Sigmoid colon (tissue), 7 donors: ENCODE measurements at regions of chr4 and their contacts with region 1.

Region 1: GRCh38 chr4:47669946-47670345 is 167.9 kb downstream of the CORIN start:
- DNase-seq: no peak
- H3K4me3 ChIP-seq: no peak overlapping the region
- H3K27ac ChIP-seq: no peak overlapping the region
- H3K4me1 ChIP-seq: no peaks in the 10 kb centered on the region
- H3K27me3 ChIP-seq: no peaks in the 10 kb centered on the region
- CTCF ChIP-seq: no peak
- EP300 ChIP-seq: no peak
- POLR2A ChIP-seq: no peak

Region 2: GRCh38 chr4:47819178-47819577 is 149.2 kb after region 1 on chr4:
- intact Hi-C with region 1: no loop called
- DNase-seq: no peak
- H3K4me3 ChIP-seq: no peak overlapping the region
- H3K27ac ChIP-seq: no peak overlapping the region
- H3K4me1 ChIP-seq: no peaks in the 10 kb centered on the region
- H3K27me3 ChIP-seq: no peaks in the 10 kb centered on the region
- CTCF ChIP-seq: no peak
- EP300 ChIP-seq: no peak
- POLR2A ChIP-seq: no peak

Region 3: DNA sequence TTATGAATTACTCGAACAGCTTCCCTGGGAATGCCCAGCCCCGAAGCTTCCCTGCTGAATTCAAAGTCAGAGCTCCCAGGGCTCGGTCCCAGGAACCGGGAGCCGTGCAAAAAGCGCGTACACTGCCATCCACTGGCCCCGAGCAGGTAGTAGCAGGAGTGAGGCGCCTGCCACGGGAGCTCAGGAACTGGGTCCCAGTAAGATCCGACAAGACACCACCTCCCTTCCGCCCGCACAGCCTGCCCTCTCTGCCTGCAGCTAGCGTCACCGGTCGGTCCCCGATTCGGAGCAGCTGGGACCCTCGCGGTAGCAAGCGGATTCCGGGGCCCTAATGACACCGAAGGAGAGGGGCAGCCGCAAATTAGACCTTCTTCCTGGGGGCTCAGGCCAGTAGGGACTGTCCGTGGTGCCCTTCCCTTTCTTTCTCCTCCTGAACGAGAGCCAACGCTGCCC is 166.7 kb after region 1 on chr4:
- intact Hi-C with region 1: loop called (anchors 10 kb)
- DNase-seq: peak; percentile 89
- H3K4me3 ChIP-seq: peak overlapping the region; percentile 15 to 49 (median 43)
- H3K27ac ChIP-seq: no peak overlapping the region
- H3K4me1 ChIP-seq: peaks cover 0 to 31% (median 26%) of the 10 kb centered on the region in 4 donors
- H3K27me3 ChIP-seq: peaks cover 0 to 9% (median 0%) of the 10 kb centered on the region in 3 donors
- CTCF ChIP-seq: peak in 3 of 4 experiments; percentile 32 to 53 (median 39)
- EP300 ChIP-seq: no peak
- POLR2A ChIP-seq: no peak

Region 4: DNA sequence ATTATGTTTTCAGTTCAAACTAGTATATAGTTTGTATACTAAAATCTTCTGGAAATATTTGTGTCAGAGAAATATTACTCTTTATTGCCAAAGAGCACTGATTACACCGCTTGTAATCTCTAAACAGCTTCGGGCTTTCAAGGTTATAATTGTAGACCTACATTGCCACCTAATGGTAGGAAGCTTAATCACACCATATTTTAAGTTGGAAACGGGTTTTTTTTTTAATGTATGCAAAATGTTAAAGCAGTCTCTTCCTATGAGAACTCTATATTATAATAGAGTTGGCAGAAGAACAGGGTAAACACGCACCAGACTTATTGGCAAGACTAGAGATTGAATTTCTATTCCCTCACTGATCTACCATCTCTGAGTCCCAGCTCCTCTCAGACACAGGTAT is 263.9 kb after region 1 on chr4:
- intact Hi-C with region 1: loop called (anchors 5 kb)
- DNase-seq: no peak
- H3K4me3 ChIP-seq: no peak overlapping the region
- H3K27ac ChIP-seq: no peak overlapping the region
- H3K4me1 ChIP-seq: no peaks in the 10 kb centered on the region
- H3K27me3 ChIP-seq: no peaks in the 10 kb centered on the region
- CTCF ChIP-seq: peak in 2 of 4 experiments; percentile 9 to 41
- EP300 ChIP-seq: no peak
- POLR2A ChIP-seq: no peak